Panc1 (cell line): ENCODE measurements at regions of chr10 and their contacts with region 1.

Region 1: GRCh38 chr10:70549962-70550458 is 52.5 kb downstream of the PRF1 start:
- DNase-seq: peak; percentile 46
- ATAC-seq: peak; percentile 92
- H3K4me3 ChIP-seq: no peak overlapping the region
- H3K27ac ChIP-seq: no peak overlapping the region
- H3K4me1 ChIP-seq: no peaks in the 10 kb centered on the region
- H3K27me3 ChIP-seq: no peaks in the 10 kb centered on the region
- CTCF ChIP-seq: peak; percentile 97

Region 2: GRCh38 chr10:69839696-69840345 is 710.2 kb before region 1 on chr10:
- CTCF ChIA-PET with region 1: no interaction called
- POLR2A ChIA-PET with region 1: no interaction called
- in situ Hi-C with region 1: no loop called
- intact Hi-C with region 1: no loop called
- DNase-seq: no peak
- ATAC-seq: no peak
- H3K4me3 ChIP-seq: no peak overlapping the region
- H3K27ac ChIP-seq: no peak overlapping the region
- H3K4me1 ChIP-seq: no peaks in the 10 kb centered on the region
- H3K27me3 ChIP-seq: no peaks in the 10 kb centered on the region
- CTCF ChIP-seq: no peak

Region 3: GRCh38 chr10:70381471-70382421 is 168.3 kb before region 1 on chr10:
- CTCF ChIA-PET with region 1: no interaction called
- POLR2A ChIA-PET with region 1: no interaction called
- in situ Hi-C with region 1: no loop called
- intact Hi-C with region 1: no loop called
- DNase-seq: no peak
- ATAC-seq: peak; percentile 45
- H3K4me3 ChIP-seq: peak overlapping the region; percentile 89 to 95
- H3K27ac ChIP-seq: peak overlapping the region; percentile 86
- H3K4me1 ChIP-seq: peaks cover 43% of the 10 kb centered on the region
- H3K27me3 ChIP-seq: no peaks in the 10 kb centered on the region
- CTCF ChIP-seq: no peak

Region 4: DNA sequence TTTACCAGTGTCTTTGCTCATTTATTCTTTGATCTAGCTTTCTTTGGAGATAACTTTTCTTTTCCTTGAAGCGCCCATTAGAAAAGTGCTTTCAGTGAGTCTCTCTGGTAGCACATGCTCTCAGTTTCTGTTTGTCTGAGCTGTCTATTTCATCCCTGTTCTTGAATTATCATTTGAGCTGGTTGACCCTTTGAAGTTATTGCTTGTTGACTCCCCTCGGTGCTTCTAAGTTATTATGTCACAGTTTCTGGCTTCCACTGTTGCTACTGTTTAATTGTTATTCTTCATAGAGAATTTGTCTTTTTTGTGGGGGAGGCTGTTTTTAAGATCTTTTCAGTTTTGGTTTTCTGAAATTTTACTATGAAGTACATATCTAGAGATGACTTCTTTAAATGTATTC is 63.9 kb after region 1 on chr10:
- CTCF ChIA-PET with region 1: interaction called, 10 read pairs
- POLR2A ChIA-PET with region 1: no interaction called
- in situ Hi-C with region 1: no loop called
- intact Hi-C with region 1: no loop called
- DNase-seq: no peak
- ATAC-seq: no peak
- H3K4me3 ChIP-seq: no peak overlapping the region
- H3K27ac ChIP-seq: no peak overlapping the region
- H3K4me1 ChIP-seq: no peaks in the 10 kb centered on the region
- H3K27me3 ChIP-seq: peaks cover 23% of the 10 kb centered on the region
- CTCF ChIP-seq: no peak

Region 5: GRCh38 chr10:70693619-70694335 is 143.8 kb after region 1 on chr10:
- CTCF ChIA-PET with region 1: interaction called, 12 read pairs
- POLR2A ChIA-PET with region 1: no interaction called
- in situ Hi-C with region 1: no loop called
- intact Hi-C with region 1: no loop called
- DNase-seq: no peak
- ATAC-seq: no peak
- H3K4me3 ChIP-seq: no peak overlapping the region
- H3K27ac ChIP-seq: no peak overlapping the region
- H3K4me1 ChIP-seq: no peaks in the 10 kb centered on the region
- H3K27me3 ChIP-seq: peaks cover 11% of the 10 kb centered on the region
- CTCF ChIP-seq: no peak

Region 6: DNA sequence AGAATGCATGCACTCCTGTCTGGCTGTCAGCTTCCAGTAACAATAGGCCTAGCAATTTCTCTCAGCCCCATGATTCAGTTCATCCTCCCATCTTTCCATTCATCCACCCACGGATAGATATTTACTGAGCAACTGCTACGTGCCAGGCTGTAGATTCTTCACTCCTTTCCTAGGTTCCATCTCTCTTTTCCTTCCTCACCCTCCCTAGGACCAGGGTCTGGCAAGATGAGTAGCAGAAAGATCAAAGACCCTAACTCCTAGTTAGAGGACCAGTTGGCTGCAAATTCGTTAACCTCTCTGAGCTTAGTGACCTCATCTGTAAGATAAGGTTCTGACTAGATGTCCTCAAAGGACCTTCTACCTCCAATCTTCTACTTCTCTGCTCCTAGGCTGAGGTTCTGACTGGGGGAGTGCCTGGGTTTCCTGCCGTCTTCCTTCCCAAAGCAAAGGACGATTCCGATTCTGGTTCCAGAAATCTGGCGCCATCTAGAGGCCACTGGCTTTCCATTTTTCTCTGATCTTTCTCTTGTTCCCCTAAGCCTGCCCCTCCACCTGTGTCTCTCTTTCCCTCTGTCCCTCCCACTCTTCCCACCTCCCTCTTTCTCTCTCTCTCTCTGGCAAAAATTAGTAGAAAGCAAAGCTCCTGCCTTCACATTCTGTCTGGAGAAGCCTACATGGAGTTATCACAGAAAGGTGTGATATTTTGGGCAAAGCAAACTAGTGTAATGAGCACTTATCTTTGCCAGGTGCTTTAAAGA is 208.9 kb after region 1 on chr10:
- CTCF ChIA-PET with region 1: interaction called, 4 read pairs
- POLR2A ChIA-PET with region 1: no interaction called
- in situ Hi-C with region 1: no loop called
- intact Hi-C with region 1: loop called (anchors 2 kb)
- DNase-seq: peak; percentile 48
- ATAC-seq: peak; percentile 78
- H3K4me3 ChIP-seq: no peak overlapping the region
- H3K27ac ChIP-seq: peak overlapping the region; percentile 40; the same call in 1 of the 2 replicates
- H3K4me1 ChIP-seq: no peaks in the 10 kb centered on the region
- H3K27me3 ChIP-seq: no peaks in the 10 kb centered on the region
- CTCF ChIP-seq: peak; percentile 89